ENCODE measurements at regions of chr12 and their contacts with region 1.

Region 1: GRCh38 chr12:53352331-53353256 is 16.4 kb upstream of the SP7 start:
- DNase-seq: peak; percentile 73 to 85
- ATAC-seq: peak; percentile 94

Region 2: GRCh38 chr12:53025250-53025649 is 327.3 kb before region 1 on chr12:
- intact Hi-C with region 1: no loop called
- DNase-seq: no peak
- ATAC-seq: no peak

Region 3: GRCh38 chr12:53419761-53420160 is 67.2 kb after region 1 on chr12:
- intact Hi-C with region 1: loop called (anchors 2 to 5 kb)
- DNase-seq: no peak
- ATAC-seq: peak; percentile 27

Region 4: GRCh38 chr12:53424626-53425514 is 72.3 kb after region 1 on chr12:
- intact Hi-C with region 1: loop called (anchors 2 to 5 kb)
- DNase-seq: no peak
- ATAC-seq: no peak

Measured in left colon (tissue), 2 donors.